ENCODE measurements at regions of chr17 and their contacts with region 1.

Region 1: GRCh38 chr17:63834431-63835166 is 7.1 kb upstream of the FTSJ3 start:
- DNase-seq: peak; percentile 88 to 89
- H3K4me3 ChIP-seq: no peak overlapping the region
- H3K27ac ChIP-seq: peak overlapping the region; percentile 24 to 56 (median 33)
- H3K4me1 ChIP-seq: peaks cover 27 to 37% of the 10 kb centered on the region in 2 donors
- H3K27me3 ChIP-seq: no peaks in the 10 kb centered on the region
- CTCF ChIP-seq: peak in 5 of 6 experiments; percentile 30 to 62 (median 44)
- POLR2A ChIP-seq: no peak

Region 2: GRCh38 chr17:63140255-63140654 is 694.3 kb before region 1 on chr17:
- intact Hi-C with region 1: no loop called
- DNase-seq: no peak
- H3K4me3 ChIP-seq: no peak overlapping the region
- H3K27ac ChIP-seq: no peak overlapping the region
- H3K4me1 ChIP-seq: peaks cover 0 to 12% of the 10 kb centered on the region in 2 donors
- H3K27me3 ChIP-seq: no peaks in the 10 kb centered on the region
- CTCF ChIP-seq: no peak
- POLR2A ChIP-seq: no peak

Region 3: GRCh38 chr17:63773381-63774140 is 61.0 kb before region 1 on chr17 and contains the start of gene CCDC47:
- intact Hi-C with region 1: loop called (anchors 5 kb)
- DNase-seq: peak; percentile 99
- H3K4me3 ChIP-seq: peak within 1 kb of the TSS; percentile 68 to 83 (median 75)
- H3K27ac ChIP-seq: peak within 1 kb of the TSS; percentile 84 to 94 (median 92)
- H3K4me1 ChIP-seq: peaks cover 18 to 25% of the 10 kb centered on the region in 2 donors
- H3K27me3 ChIP-seq: no peaks in the 10 kb centered on the region
- CTCF ChIP-seq: no peak
- POLR2A ChIP-seq: peak; percentile 82 to 96
- total RNA-seq, gene CCDC47: 69.4 to 120 (median 85.1) TPM

Measured in thyroid gland (tissue), 4 donors.